Activated CD4-positive, alpha-beta memory T cell treated with anti-CD3 and anti-CD28 coated beads for 36 hours (primary cell): ENCODE measurements at regions of chr12 and their contacts with region 1.

Region 1: DNA sequence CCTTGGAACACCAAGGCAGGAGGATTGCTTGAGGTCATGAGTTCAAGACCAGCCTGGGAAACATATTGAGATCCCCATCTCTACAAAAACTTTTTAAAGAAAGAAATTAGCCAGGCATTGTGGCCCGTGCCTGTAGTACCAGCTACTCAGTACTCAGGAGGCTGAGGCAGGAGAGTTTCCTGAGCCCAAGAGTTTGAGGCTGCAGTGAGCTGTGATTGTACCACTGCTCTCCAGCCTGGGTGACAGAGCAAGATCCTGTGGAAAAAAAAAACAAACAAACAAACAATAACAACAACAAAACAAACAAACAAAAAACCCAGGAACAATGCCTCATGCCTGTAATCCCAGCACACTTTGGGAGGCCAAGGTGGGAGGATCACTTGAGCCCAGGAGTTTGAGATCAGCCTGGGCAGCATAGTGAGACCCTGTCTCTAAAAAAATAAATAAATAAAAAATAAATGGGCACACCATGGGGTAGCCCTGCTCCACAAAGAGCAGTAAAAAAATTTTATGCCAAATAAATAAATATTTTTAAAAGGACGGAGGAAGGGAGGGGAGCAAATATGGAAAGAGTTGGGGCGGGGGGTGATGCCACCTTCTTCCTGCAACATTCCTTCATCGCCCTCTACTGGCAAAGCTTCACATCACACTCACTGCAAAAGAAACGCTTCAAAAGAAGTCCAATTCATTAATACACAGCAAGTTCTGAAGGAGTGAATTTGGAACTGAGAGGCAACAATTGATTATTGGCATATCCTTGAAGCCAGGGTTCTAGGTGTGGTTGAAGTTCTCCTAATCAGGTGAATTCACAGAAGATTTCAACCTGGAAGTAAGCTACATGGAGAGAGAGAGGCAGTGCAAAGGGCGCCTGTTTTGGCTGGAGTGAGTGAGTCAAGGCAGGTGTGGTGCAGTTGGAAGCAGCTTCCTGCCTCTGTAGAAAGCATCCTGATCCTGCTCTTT is 8.8 kb upstream of the GNPTAB start:
- DNase-seq: peak; percentile 74
- H3K4me3 Mint-ChIP-seq: no peak overlapping the region
- H3K27ac Mint-ChIP-seq: no peak overlapping the region
- H3K4me1 Mint-ChIP-seq: peaks cover 10% of the 10 kb centered on the region
- H3K27me3 Mint-ChIP-seq: no peaks in the 10 kb centered on the region

Region 2: GRCh38 chr12:101414533-101415119 is 425.0 kb before region 1 on chr12:
- CTCF ChIA-PET with region 1: interaction called, 9 read pairs
- POLR2A ChIA-PET with region 1: no interaction called
- intact Hi-C with region 1: loop called (anchors 1 kb)
- DNase-seq: no peak
- H3K4me3 Mint-ChIP-seq: no peak overlapping the region
- H3K27ac Mint-ChIP-seq: no peak overlapping the region
- H3K4me1 Mint-ChIP-seq: no peaks in the 10 kb centered on the region
- H3K27me3 Mint-ChIP-seq: no peaks in the 10 kb centered on the region

Region 3: DNA sequence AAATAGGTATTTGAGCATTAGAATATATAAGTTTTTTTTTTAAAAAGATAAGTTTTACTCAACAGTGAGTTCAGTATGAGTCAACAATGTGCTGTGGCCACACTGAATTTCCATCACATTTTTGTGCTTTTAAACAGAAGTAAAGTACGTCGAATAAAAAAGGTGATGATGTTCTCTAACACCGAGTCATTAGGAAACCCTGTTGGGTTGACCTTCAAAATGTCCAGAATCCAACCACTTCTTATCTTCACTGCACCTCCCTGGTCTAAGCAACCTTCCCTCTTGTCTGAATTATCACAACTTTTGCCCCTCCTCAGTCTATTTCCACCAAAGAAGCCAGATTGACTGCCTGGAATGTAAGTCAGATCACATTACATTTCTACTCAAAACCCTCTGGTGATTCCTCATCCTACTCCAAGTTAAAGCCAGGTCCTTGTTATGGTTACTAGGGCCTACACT is 57.3 kb before region 1 on chr12:
- CTCF ChIA-PET with region 1: interaction called, 18 read pairs
- POLR2A ChIA-PET with region 1: no interaction called
- intact Hi-C with region 1: no loop called
- DNase-seq: peak; percentile 22
- H3K4me3 Mint-ChIP-seq: no peak overlapping the region
- H3K27ac Mint-ChIP-seq: peak overlapping the region; percentile 18
- H3K4me1 Mint-ChIP-seq: peaks cover 22% of the 10 kb centered on the region
- H3K27me3 Mint-ChIP-seq: no peaks in the 10 kb centered on the region

Region 4: GRCh38 chr12:101792051-101792931 is 47.3 kb before region 1 on chr12:
- CTCF ChIA-PET with region 1: interaction called, 15 read pairs
- POLR2A ChIA-PET with region 1: no interaction called
- intact Hi-C with region 1: no loop called
- DNase-seq: no peak
- H3K4me3 Mint-ChIP-seq: no peak overlapping the region
- H3K27ac Mint-ChIP-seq: no peak overlapping the region
- H3K4me1 Mint-ChIP-seq: peaks cover 17% of the 10 kb centered on the region
- H3K27me3 Mint-ChIP-seq: no peaks in the 10 kb centered on the region

Region 5: GRCh38 chr12:101982307-101982706 is 142.7 kb after region 1 on chr12:
- CTCF ChIA-PET with region 1: no interaction called
- POLR2A ChIA-PET with region 1: no interaction called
- intact Hi-C with region 1: no loop called
- DNase-seq: no peak
- H3K4me3 Mint-ChIP-seq: no peak overlapping the region
- H3K27ac Mint-ChIP-seq: no peak overlapping the region
- H3K4me1 Mint-ChIP-seq: no peaks in the 10 kb centered on the region
- H3K27me3 Mint-ChIP-seq: peaks cover 2% of the 10 kb centered on the region